ENCODE measurements at regions of chr20 and their contacts with region 1.

Region 1: GRCh38 chr20:5918856-5919625 is 31.3 kb downstream of the TRMT6 start:
- DNase-seq: no peak
- ATAC-seq: peak; percentile 89
- H3K4me3 ChIP-seq: no peak overlapping the region
- H3K27ac ChIP-seq: no peak overlapping the region
- H3K4me1 ChIP-seq: no peaks in the 10 kb centered on the region
- H3K27me3 ChIP-seq: no peaks in the 10 kb centered on the region
- CTCF ChIP-seq: no peak
- EP300 ChIP-seq: no peak
- POLR2A ChIP-seq: no peak
- RAD21 ChIP-seq: no peak

Region 2: DNA sequence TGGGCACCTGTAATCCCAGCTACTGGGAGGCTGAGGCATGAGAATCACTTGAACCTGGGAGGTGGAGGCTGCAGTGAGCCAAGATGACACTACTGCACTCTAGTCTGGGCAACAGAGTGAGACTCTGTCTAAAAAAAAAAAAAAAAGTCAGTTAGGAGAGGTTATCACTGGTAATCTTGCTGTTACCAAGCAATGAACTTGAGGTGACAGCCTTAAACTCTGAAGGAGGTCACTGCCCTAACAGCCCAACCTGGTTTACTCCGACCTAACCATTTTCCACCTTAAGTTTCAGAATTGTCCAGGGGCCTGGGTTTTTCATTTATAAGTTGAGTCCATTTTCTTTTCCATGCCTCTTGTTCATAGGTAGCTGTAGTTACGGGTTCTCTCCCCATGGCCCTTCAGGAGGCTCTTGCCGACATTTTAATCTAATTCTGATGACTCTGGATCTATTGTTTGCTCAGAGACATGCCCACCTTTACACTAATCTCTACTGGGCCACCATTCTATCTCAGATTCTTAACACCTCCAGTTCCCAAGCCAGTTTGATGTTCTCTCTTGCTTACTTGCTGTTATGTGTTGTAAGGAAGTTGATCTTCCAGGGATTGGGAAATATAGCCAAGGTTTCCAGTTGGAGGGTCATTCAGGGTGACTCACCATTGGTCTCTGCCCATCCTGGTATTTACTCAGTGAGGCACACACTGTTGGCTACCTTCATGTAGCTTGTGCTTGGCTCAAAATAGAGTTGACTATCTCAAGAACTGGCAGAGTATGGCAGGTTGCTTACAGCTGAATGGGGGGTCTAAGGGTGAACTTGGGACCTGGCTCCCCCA is 139.8 kb before region 1 on chr20:
- CTCF ChIA-PET with region 1: no interaction called
- POLR2A ChIA-PET with region 1: interaction called, 10 read pairs
- RAD21 ChIA-PET with region 1: no interaction called
- SMC1A ChIA-PET with region 1: no interaction called
- in situ Hi-C with region 1: no loop called
- intact Hi-C with region 1: no loop called
- DNase-seq: no peak
- ATAC-seq: no peak
- H3K4me3 ChIP-seq: no peak overlapping the region
- H3K27ac ChIP-seq: no peak overlapping the region
- H3K4me1 ChIP-seq: peaks cover 7% of the 10 kb centered on the region
- H3K27me3 ChIP-seq: no peaks in the 10 kb centered on the region
- CTCF ChIP-seq: no peak
- EP300 ChIP-seq: no peak
- POLR2A ChIP-seq: no peak
- RAD21 ChIP-seq: no peak

Region 3: DNA sequence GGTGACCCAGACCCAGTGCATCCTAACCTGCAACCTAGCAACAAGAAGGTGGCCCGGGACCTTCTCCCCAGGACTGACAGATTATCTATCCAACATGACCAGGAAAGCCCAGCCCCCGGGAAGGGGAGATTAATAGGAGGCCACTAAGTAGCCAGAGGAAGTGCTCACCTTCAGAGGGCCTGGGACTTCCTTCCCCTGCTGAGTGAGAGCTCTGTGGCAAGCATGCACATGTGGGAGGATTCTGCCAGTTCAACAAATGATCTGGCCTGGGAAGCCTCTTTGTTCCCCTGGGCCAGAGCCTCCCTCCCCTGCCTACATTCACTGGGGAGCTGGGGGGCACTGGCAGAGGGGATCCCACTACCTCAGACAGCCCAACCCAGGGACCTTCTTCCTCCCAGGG is 129.2 kb before region 1 on chr20:
- CTCF ChIA-PET with region 1: no interaction called
- POLR2A ChIA-PET with region 1: no interaction called
- RAD21 ChIA-PET with region 1: no interaction called
- SMC1A ChIA-PET with region 1: no interaction called
- in situ Hi-C with region 1: no loop called
- intact Hi-C with region 1: no loop called
- DNase-seq: no peak
- ATAC-seq: no peak
- H3K4me3 ChIP-seq: no peak overlapping the region
- H3K27ac ChIP-seq: no peak overlapping the region
- H3K4me1 ChIP-seq: no peaks in the 10 kb centered on the region
- H3K27me3 ChIP-seq: no peaks in the 10 kb centered on the region
- CTCF ChIP-seq: no peak
- EP300 ChIP-seq: no peak
- POLR2A ChIP-seq: no peak
- RAD21 ChIP-seq: no peak

Region 4: DNA sequence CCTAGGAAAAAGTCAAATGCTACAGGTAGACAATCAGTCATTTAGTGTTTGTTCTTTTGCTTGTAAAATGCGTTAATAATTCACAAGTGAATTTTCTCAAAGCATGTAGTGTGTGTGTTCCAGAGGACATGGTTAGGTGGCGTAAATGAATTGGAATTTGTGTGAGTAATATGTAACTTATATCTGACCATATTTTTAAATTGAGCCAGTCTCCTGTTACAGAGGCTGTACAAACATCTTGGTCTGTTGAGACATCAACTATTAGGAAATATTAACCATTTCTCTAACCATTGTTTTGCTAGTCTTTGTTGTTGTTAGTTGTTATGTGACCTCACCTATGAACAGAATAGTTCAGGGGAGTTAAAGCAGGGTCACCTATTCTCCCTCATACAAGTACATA is 54.1 kb after region 1 on chr20:
- CTCF ChIA-PET with region 1: no interaction called
- POLR2A ChIA-PET with region 1: no interaction called
- RAD21 ChIA-PET with region 1: no interaction called
- SMC1A ChIA-PET with region 1: no interaction called
- in situ Hi-C with region 1: no loop called
- intact Hi-C with region 1: no loop called
- DNase-seq: no peak
- ATAC-seq: no peak
- H3K4me3 ChIP-seq: no peak overlapping the region
- H3K27ac ChIP-seq: no peak overlapping the region
- H3K4me1 ChIP-seq: no peaks in the 10 kb centered on the region
- H3K27me3 ChIP-seq: no peaks in the 10 kb centered on the region
- CTCF ChIP-seq: no peak
- EP300 ChIP-seq: no peak
- POLR2A ChIP-seq: no peak
- RAD21 ChIP-seq: no peak